Activated naive CD4-positive, alpha-beta T cell treated with anti-CD3 and anti-CD28 coated beads for 36 hours (primary cell): ENCODE measurements at regions of chr3 and their contacts with region 1.

Region 1: DNA sequence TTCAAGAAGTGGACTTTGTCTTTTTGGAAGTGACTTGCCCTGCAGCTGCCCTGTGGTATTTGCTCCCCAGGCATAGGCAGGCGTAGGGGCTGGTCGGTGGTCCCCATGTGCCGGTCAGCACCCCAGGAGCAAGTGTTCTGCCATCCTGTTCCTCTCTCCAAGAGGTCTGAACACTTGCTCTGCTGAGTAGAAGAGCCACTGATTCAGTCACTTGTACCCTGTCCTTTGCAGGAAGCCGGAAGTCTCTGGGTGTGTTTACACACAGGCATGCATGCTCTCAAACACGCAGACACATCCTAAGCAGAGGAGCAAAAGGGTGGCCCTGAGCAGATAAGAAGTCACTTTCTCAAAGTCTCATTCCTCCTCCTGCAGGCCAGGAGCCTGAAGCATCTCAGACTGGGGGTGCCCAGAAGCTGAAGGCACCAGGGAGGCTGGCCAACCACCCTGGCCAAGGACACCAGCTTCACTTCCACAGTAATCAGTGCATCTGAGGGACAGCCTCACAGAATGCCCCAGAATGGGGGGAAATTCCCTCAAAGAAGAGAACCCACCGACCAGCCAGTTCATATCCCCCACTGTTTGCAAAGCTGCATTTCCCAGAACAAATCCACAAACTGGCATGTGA is 88.7 kb upstream of the POMGNT2 start:
- DNase-seq: peak; percentile 66
- H3K4me3 Mint-ChIP-seq: peak overlapping the region; percentile 5
- H3K27ac Mint-ChIP-seq: peak overlapping the region; percentile 82
- H3K4me1 Mint-ChIP-seq: peaks cover 80% of the 10 kb centered on the region
- H3K27me3 Mint-ChIP-seq: no peaks in the 10 kb centered on the region

Region 2: GRCh38 chr3:43043071-43043766 is 151.4 kb before region 1 on chr3:
- CTCF ChIA-PET with region 1: no interaction called
- intact Hi-C with region 1: no loop called
- DNase-seq: no peak
- H3K4me3 Mint-ChIP-seq: no peak overlapping the region
- H3K27ac Mint-ChIP-seq: no peak overlapping the region
- H3K4me1 Mint-ChIP-seq: peaks cover 7% of the 10 kb centered on the region
- H3K27me3 Mint-ChIP-seq: no peaks in the 10 kb centered on the region

Region 3: GRCh38 chr3:43181202-43181821 is 13.3 kb before region 1 on chr3:
- CTCF ChIA-PET with region 1: no interaction called
- intact Hi-C with region 1: loop called (anchors 1 kb)
- DNase-seq: peak; percentile 86
- H3K4me3 Mint-ChIP-seq: no peak overlapping the region
- H3K27ac Mint-ChIP-seq: peak overlapping the region; percentile 56
- H3K4me1 Mint-ChIP-seq: peaks cover 43% of the 10 kb centered on the region
- H3K27me3 Mint-ChIP-seq: no peaks in the 10 kb centered on the region